ENCODE measurements at regions of chr1 and their contacts with region 1.

Region 1: GRCh38 chr1:224377676-224378006 is 21.0 kb downstream of the CNIH4 start:
- H3K4me3 Mint-ChIP-seq: no peak overlapping the region
- H3K27ac Mint-ChIP-seq: no peak overlapping the region
- H3K4me1 Mint-ChIP-seq: peaks cover 49% of the 10 kb centered on the region
- H3K27me3 Mint-ChIP-seq: no peaks in the 10 kb centered on the region

Region 2: DNA sequence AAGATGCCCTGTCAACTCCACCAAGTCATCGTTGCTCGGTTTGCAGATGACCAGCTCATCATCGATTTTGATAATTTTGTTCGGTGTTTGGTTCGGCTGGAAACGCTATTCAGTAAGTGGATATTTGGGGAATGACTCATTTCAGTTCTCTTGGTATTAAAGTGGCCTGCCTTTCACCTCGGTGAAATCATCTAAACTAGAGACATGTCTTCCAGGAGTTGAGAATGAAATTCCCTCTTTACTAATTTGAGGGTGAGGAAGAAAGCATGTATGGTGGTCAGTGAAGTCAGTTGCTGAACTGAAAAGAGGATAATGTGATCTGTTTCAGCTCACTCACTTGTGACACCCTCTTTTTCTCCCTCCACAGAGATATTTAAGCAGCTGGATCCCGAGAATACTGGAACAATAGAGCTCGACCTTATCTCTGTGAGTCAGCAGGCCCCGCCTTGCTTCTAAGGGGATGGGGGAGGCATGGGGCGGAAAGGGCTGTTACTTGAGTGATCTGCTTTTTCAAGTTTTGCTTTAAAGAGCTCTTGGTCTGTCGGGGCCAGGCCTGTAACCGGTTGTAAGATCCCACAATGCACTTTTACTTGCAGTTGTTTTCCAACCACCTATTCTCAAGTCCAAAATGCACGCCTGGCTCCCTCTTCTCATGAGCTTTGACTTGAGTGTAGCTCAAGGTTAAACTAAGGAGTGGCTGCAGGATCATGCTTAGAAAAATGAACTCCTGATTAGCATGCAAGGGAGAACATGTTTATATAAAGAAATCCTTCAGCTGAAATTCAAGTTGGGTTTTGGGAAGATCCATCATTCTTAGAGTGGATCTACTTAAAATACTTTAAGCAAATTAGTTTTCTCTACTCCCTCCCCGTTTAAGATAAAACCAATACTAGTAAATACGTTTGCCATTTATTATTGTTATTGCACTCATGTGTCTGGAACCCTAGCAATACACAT is 605.5 kb before region 1 on chr1:
- intact Hi-C with region 1: loop called (anchors 10 kb)
- H3K4me3 Mint-ChIP-seq: no peak overlapping the region
- H3K27ac Mint-ChIP-seq: no peak overlapping the region
- H3K4me1 Mint-ChIP-seq: peaks cover 6% of the 10 kb centered on the region
- H3K27me3 Mint-ChIP-seq: no peaks in the 10 kb centered on the region

Region 3: DNA sequence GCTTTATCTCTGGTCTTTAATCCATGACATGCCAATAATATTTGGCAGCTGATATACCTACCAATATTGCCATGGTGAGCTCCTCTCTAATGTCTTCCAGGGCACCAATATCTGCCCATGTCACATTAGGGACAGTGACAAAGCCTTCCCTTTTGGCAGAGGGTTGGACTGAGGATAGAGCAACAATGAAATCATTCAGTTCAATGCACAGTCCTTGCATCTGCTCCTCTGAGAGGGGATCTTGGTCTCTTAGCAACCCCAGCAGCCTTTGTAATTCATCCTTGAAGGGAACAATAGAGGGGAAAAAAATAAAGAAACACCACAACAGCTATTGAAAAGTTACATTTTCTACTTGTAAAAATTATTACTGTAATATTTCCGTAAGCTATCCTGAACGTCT is 89.9 kb before region 1 on chr1:
- intact Hi-C with region 1: loop called (anchors 10 kb)
- H3K4me3 Mint-ChIP-seq: no peak overlapping the region
- H3K27ac Mint-ChIP-seq: no peak overlapping the region
- H3K4me1 Mint-ChIP-seq: no peaks in the 10 kb centered on the region
- H3K27me3 Mint-ChIP-seq: no peaks in the 10 kb centered on the region

Region 4: DNA sequence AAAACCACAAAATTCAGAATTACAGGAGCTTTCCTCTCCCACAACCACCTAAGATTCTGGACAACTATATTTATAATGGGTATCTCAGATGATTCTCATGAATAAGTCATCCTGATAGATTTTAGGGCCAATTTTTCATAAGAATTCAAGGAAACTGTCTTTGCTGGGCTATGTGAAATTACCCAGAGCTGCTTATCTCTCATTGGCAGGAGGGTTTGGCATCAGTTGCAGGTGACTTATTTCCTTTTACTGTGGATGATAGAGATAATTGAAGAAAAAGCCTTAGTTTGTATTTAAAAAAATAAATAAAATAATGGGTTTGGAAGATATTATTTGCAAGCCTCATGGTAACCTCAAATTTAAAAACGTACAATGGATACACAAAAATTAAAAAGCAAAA is 95.2 kb after region 1 on chr1:
- intact Hi-C with region 1: no loop called
- H3K4me3 Mint-ChIP-seq: no peak overlapping the region
- H3K27ac Mint-ChIP-seq: no peak overlapping the region
- H3K4me1 Mint-ChIP-seq: peaks cover 6% of the 10 kb centered on the region
- H3K27me3 Mint-ChIP-seq: no peaks in the 10 kb centered on the region

Measured in dendritic cell treated with granulocyte-macrophage colony-stimulating factor and Interleukin-4, amounts not matched to agents 40 ng/mL and 50 ng/mL, for 4 days (primary cell).